ENCODE measurements at regions of chr15 and their contacts with region 1.

Region 1: GRCh38 chr15:65184868-65185738 is at the start of gene CLPX:
- DNase-seq: peak; percentile 93
- H3K4me3 Mint-ChIP-seq: peak within 1 kb of the TSS; percentile 95
- H3K27ac Mint-ChIP-seq: peak within 1 kb of the TSS; percentile 88
- H3K4me1 Mint-ChIP-seq: peaks cover 30% of the 10 kb centered on the region
- H3K27me3 Mint-ChIP-seq: no peaks in the 10 kb centered on the region
- total RNA-seq, gene CLPX: 58.8 to 64.8 TPM

Region 2: GRCh38 chr15:65028921-65029735 is 156.0 kb before region 1 on chr15 and contains the start of gene MTFMT:
- CTCF ChIA-PET with region 1: interaction called, 3 read pairs
- POLR2A ChIA-PET with region 1: no interaction called
- intact Hi-C with region 1: loop called (anchors 10 kb)
- DNase-seq: peak; percentile 94
- H3K4me3 Mint-ChIP-seq: peak within 1 kb of the TSS; percentile 83
- H3K27ac Mint-ChIP-seq: peak within 1 kb of the TSS; percentile 38
- H3K4me1 Mint-ChIP-seq: peaks cover 21% of the 10 kb centered on the region
- H3K27me3 Mint-ChIP-seq: peaks cover 6% of the 10 kb centered on the region
- total RNA-seq, gene MTFMT: 18.2 to 18.3 TPM

Region 3: GRCh38 chr15:65286704-65287519 is 101.8 kb after region 1 on chr15 and contains the start of gene PARP16:
- CTCF ChIA-PET with region 1: interaction called, 20 read pairs
- POLR2A ChIA-PET with region 1: interaction called, 11 read pairs
- intact Hi-C with region 1: no loop called
- DNase-seq: peak; percentile 95
- H3K4me3 Mint-ChIP-seq: peak within 1 kb of the TSS; percentile 83
- H3K27ac Mint-ChIP-seq: peak within 1 kb of the TSS; percentile 77
- H3K4me1 Mint-ChIP-seq: peaks cover 34% of the 10 kb centered on the region
- H3K27me3 Mint-ChIP-seq: no peaks in the 10 kb centered on the region
- total RNA-seq, gene PARP16: 12.3 TPM

Region 4: GRCh38 chr15:65304389-65305144 is 119.5 kb after region 1 on chr15 and contains the start of gene RNU5B-1:
- CTCF ChIA-PET with region 1: interaction called, 7 read pairs
- POLR2A ChIA-PET with region 1: interaction called, 33 read pairs
- intact Hi-C with region 1: loop called (anchors 2 kb)
- DNase-seq: peak; percentile 85
- H3K4me3 Mint-ChIP-seq: peak within 1 kb of the TSS; percentile 93
- H3K27ac Mint-ChIP-seq: peak within 1 kb of the TSS; percentile 97
- H3K4me1 Mint-ChIP-seq: peaks cover 16% of the 10 kb centered on the region
- H3K27me3 Mint-ChIP-seq: peaks cover 2% of the 10 kb centered on the region
- total RNA-seq, gene RNU5B-1: not detected

Measured in activated CD4-positive, alpha-beta memory T cell treated with anti-CD3 and anti-CD28 coated beads for 36 hours (primary cell).